ENCODE measurements at regions of chr5 and their contacts with region 1.

Region 1: GRCh38 chr5:172106511-172107356 is 81.3 kb downstream of the STK10 start:
- DNase-seq: peak; percentile 9
- ATAC-seq: 0 out of 3 replicates have a peak, but pooled peaks have one; percentile 1
- H3K4me3 ChIP-seq: no peak overlapping the region
- H3K27ac ChIP-seq: no peak overlapping the region; the same call in 1 of the 2 replicates
- H3K4me1 ChIP-seq: peaks cover 34% of the 10 kb centered on the region
- H3K27me3 ChIP-seq: no peaks in the 10 kb centered on the region
- CTCF ChIP-seq: peak; percentile 92 to 99 (median 95)
- EP300 ChIP-seq: no peak
- POLR2A ChIP-seq: no peak
- RAD21 ChIP-seq: peak; percentile 98

Region 2: DNA sequence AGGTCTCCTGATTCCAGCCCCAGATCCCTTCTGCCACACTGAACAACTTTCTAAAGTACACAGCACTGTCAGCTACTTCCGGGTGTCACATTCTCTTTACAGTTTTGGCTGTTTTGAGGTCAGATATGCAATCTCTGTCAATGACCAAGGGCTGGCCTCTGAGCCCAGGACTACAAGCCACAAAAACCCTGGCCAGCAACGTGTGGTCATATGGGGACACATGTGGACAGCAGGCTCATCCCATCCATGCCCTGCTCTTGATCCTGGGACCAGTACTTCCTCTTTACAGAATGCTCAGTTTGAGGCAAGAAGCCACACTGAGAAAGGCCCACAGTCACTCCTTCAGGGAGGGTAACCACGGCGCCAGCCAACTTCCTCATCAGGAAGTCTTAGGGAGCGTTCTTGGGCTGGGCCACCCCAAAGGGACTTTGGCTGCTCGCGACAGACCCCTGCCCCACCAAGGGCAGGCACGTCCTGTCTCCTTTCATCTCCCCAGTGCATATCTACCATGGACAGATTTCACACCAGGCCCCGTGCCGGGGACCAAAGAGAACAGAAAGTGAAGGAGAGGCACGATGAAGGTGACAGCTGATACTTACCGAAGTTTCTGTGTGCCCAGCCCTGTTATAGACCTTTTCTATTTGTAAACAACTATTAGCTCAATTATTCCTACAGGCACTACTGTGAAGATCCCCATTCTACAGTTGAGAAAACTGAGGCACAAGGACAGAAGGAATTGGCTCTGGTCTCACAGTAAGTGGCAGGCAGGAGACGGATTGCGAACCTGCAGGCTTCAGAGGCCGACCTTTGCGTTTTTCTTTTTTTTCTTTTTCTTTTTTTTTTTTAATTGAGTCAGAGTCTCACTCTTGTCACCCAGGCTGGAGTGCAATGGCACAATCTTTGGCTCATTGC is 44.0 kb after region 1 on chr5:
- CTCF ChIA-PET with region 1: interaction called, 4 read pairs
- POLR2A ChIA-PET with region 1: interaction called, 5 read pairs
- RAD21 ChIA-PET with region 1: interaction called, 5 read pairs
- SMC1A ChIA-PET with region 1: interaction called, 3 read pairs
- in situ Hi-C with region 1: no loop called
- intact Hi-C with region 1: loop called (anchors 1 kb)
- DNase-seq: no peak
- ATAC-seq: peak; percentile 84
- H3K4me3 ChIP-seq: peak overlapping the region; percentile 50; the same call in 1 of the 2 replicates
- H3K27ac ChIP-seq: peak overlapping the region; percentile 87
- H3K4me1 ChIP-seq: peaks cover 36% of the 10 kb centered on the region
- H3K27me3 ChIP-seq: no peaks in the 10 kb centered on the region
- CTCF ChIP-seq: no peak
- EP300 ChIP-seq: peak in 1 of 2 experiments; percentile 31; a peak in 1 of 4 replicates
- POLR2A ChIP-seq: no peak
- RAD21 ChIP-seq: no peak

Region 3: GRCh38 chr5:172283020-172283861 is 176.5 kb after region 1 on chr5 and contains the start of gene UBTD2:
- CTCF ChIA-PET with region 1: interaction called, 13 read pairs
- POLR2A ChIA-PET with region 1: interaction called, 5 read pairs
- RAD21 ChIA-PET with region 1: interaction called, 12 read pairs
- SMC1A ChIA-PET with region 1: interaction called, 8 read pairs
- in situ Hi-C with region 1: no loop called
- intact Hi-C with region 1: loop called (anchors 2 kb)
- DNase-seq: no peak
- ATAC-seq: peak; percentile 83
- H3K4me3 ChIP-seq: peak within 1 kb of the TSS; percentile 99
- H3K27ac ChIP-seq: peak within 1 kb of the TSS; percentile 72
- H3K4me1 ChIP-seq: no peaks in the 10 kb centered on the region; the same call in 1 of the 2 replicates
- H3K27me3 ChIP-seq: no peaks in the 10 kb centered on the region
- CTCF ChIP-seq: peak; percentile 30 to 64 (median 57); a peak in 3 of 6 replicates
- EP300 ChIP-seq: no peak
- POLR2A ChIP-seq: no peak
- RAD21 ChIP-seq: peak; percentile 46
- polyA plus RNA-seq, gene UBTD2: 7.7 to 12.5 TPM

Region 4: GRCh38 chr5:172315587-172316493 is 209.1 kb after region 1 on chr5:
- CTCF ChIA-PET with region 1: interaction called, 3 read pairs
- POLR2A ChIA-PET with region 1: interaction called, 4 read pairs
- RAD21 ChIA-PET with region 1: interaction called, 3 read pairs
- SMC1A ChIA-PET with region 1: no interaction called
- in situ Hi-C with region 1: no loop called
- intact Hi-C with region 1: loop called (anchors 1 kb)
- DNase-seq: no peak
- ATAC-seq: peak; percentile 85
- H3K4me3 ChIP-seq: no peak overlapping the region
- H3K27ac ChIP-seq: peak overlapping the region; percentile 84
- H3K4me1 ChIP-seq: peaks cover 52% of the 10 kb centered on the region
- H3K27me3 ChIP-seq: no peaks in the 10 kb centered on the region
- CTCF ChIP-seq: no peak
- EP300 ChIP-seq: no peak
- POLR2A ChIP-seq: no peak
- RAD21 ChIP-seq: peak; percentile 10; the same call in 1 of the 2 replicates

Region 5: DNA sequence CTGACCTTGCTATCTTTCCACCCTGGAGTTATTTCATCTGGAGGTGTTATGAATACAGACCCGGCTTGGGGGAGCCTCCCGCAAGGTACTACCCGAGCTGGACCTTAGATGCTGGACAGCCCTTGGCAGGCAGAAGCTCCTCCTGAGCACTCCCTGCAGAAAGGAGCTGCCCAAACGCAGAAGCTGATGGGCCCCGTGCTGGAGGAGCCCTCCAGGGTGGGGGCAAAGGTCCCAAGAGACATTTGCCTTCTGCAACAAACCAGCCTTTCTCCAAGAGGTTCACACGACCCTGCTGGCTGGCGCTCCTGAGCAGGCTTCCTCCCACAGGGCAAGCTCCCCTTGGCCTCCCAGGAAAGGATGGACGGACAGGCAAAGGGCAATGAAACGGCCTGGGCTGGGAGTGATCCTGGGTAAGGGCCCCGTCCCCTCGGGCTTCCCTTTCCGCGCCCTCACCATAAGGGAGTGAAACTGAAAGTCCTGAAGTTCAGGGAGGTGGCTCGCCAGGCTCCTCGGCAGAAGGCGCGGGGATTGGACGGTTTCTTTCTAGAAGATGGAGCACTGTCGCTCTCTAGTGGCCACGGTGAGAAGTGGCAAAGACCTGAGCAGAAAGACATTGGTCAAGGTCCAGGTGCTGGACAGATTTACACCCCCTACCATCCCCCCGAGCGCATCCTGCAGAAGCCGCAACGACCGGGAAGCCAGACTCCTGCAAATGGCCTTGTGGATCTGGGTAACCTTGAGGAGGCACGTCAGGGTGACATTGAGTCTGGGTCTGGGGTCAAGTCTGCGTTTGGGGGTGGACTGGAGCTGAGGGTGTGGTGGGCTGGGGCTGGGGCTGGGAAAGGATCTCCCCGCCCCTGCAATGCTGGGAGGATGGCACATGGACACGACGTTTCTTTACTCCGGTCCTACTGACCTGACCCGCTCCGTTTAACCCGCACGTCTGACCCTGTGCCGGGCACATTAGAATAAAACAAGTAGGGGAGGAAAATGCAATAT is 590.7 kb after region 1 on chr5:
- CTCF ChIA-PET with region 1: no interaction called
- POLR2A ChIA-PET with region 1: no interaction called
- RAD21 ChIA-PET with region 1: no interaction called
- SMC1A ChIA-PET with region 1: no interaction called
- in situ Hi-C with region 1: no loop called
- intact Hi-C with region 1: loop called (anchors 10 kb)
- DNase-seq: peak; percentile 33
- ATAC-seq: peak; percentile 94
- H3K4me3 ChIP-seq: peak overlapping the region; percentile 75
- H3K27ac ChIP-seq: 0 out of 2 replicates have a peak overlapping the region, but pooled peaks have one; percentile 16
- H3K4me1 ChIP-seq: peaks cover 7% of the 10 kb centered on the region
- H3K27me3 ChIP-seq: no peaks in the 10 kb centered on the region; a peak in 2 of 4 replicates
- CTCF ChIP-seq: peak; percentile 89 to 98 (median 91)
- EP300 ChIP-seq: no peak
- POLR2A ChIP-seq: peak; percentile 65
- RAD21 ChIP-seq: peak; percentile 92

Measured in GM12878 (cell line).